Common myeloid progenitor, CD34-positive (primary cell): ENCODE measurements at regions of chr1 and their contacts with region 1.

Region 1: DNA sequence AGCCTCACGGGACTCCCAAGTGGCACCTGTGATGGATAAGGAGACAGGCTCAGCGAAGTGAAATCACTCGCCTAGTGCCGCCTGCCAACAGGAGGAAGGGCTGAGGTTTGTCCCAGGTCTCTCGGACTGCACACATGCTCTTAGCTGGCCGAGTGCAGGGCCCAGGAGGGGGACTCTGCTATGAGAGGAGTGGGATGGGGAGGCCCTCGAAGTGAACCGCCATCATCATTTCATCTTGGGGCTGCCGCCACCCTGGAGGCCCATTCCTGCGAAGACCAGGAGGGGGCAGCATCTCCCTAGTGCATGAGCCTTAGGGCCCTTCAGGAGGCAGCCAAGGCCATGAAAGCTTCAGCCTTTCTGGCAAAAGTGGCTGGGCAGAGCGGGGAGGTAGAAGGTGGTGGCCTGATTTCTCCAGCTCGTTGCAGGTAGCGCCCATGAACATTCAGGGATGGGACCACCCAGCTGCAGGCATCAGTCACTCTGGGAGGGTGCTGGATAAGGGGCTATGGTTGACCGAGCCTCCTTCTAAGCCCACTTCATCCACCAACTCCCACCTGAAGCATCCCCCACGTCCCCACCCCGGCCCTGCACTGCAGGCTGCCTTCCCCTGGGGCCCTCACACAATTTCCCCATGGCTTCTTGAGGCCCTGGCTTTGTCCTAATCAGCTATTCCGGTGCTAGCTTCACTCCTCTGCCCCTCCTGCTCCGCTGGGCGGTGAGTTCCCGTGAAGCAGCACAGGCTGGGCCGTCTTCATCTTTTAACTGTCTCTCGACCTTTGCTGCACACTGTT is 17.2 kb upstream of the RASSF5 start:
- DNase-seq: peak; percentile 60 to 78 (median 70)
- H3K4me3 ChIP-seq: no peak overlapping the region
- H3K27ac ChIP-seq: no peak overlapping the region
- H3K4me1 ChIP-seq: peaks cover 0 to 6% (median 3%) of the 10 kb centered on the region in 4 experiments
- H3K27me3 ChIP-seq: no peaks in the 10 kb centered on the region

Region 2: DNA sequence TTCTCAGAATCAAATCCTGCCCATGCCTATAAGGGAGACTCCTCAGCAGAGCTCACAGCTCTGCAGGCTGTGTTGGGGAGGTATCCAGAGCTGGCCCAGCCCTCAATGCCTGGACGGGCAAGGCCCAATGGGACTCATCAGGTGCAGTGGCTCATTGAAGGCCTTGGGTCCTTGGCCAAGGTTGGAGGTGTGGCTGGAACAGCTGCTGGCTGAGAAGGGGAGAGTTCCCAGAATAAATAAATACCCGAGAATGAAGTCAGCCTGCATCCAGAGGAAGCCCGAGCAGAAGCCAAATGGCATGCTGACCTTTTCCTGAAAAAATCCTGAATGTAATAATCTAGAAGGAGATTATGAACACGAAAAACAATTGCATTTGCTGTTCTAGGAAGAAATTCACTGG is 45.1 kb before region 1 on chr1:
- CTCF ChIA-PET with region 1: no interaction called
- POLR2A ChIA-PET with region 1: no interaction called
- DNase-seq: no peak
- H3K4me3 ChIP-seq: no peak overlapping the region
- H3K27ac ChIP-seq: no peak overlapping the region
- H3K4me1 ChIP-seq: no peaks in the 10 kb centered on the region
- H3K27me3 ChIP-seq: no peaks in the 10 kb centered on the region

Region 3: GRCh38 chr1:206575165-206575893 is 85.2 kb after region 1 on chr1:
- CTCF ChIA-PET with region 1: interaction called, 17 read pairs
- POLR2A ChIA-PET with region 1: no interaction called
- DNase-seq: peak; percentile 84 to 93 (median 92)
- H3K4me3 ChIP-seq: peak overlapping the region in 4 of 7 experiments; percentile 23 to 58 (median 36)
- H3K27ac ChIP-seq: peak overlapping the region; percentile 25 to 88
- H3K4me1 ChIP-seq: peaks cover 25 to 72% (median 49%) of the 10 kb centered on the region in 4 experiments
- H3K27me3 ChIP-seq: no peaks in the 10 kb centered on the region